Mammary epithelial cell (primary cell): ENCODE measurements at regions of chr2 and their contacts with region 1.

Region 1: GRCh38 chr2:85215448-85216401 is 82.5 kb downstream of the TCF7L1 start:
- DNase-seq: peak; percentile 55
- H3K4me3 ChIP-seq: no peak overlapping the region
- H3K27ac ChIP-seq: peak overlapping the region; percentile 9
- H3K4me1 ChIP-seq: peaks cover 20% of the 10 kb centered on the region
- H3K27me3 ChIP-seq: no peaks in the 10 kb centered on the region
- CTCF ChIP-seq: no peak

Region 2: GRCh38 chr2:85175369-85176299 is 40.1 kb before region 1 on chr2:
- CTCF ChIA-PET with region 1: no interaction called
- dilution Hi-C with region 1: no loop called
- in situ Hi-C with region 1: no loop called
- intact Hi-C with region 1: loop called (anchors 5 kb)
- DNase-seq: no peak
- H3K4me3 ChIP-seq: no peak overlapping the region
- H3K27ac ChIP-seq: no peak overlapping the region
- H3K4me1 ChIP-seq: peaks cover 12% of the 10 kb centered on the region
- H3K27me3 ChIP-seq: no peaks in the 10 kb centered on the region
- CTCF ChIP-seq: no peak

Region 3: DNA sequence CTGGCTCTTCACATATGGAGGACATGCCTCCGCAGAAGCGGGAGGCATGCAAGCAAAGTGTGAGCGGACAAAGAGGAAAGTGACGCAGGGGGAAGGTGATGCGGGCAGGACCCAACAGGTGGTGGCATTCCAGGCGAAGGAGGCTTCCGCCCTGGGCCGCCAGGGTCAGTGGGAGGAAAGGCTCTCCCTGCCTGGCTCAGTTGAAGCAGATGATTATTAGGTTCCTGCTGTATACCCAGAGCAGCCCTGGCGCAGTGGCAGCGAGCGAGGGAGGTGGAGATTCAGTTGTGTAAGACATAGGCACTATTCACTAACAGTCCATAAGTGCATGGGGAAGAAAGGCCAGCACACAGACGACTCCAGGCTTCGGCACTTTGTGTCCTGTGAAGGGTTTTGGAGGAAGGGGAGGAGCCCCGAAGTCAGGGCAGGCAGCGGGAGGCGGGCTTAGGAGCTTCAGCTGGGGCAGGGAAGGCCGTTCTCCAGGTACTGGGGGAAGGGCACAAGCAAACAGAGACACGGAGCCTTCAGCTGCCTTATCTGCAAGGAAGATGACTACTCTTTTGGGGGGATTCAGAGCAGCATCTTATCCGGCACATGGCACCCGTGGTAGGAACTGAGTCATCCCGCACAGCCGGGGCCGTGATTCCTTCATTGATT is 22.3 kb after region 1 on chr2:
- CTCF ChIA-PET with region 1: no interaction called
- dilution Hi-C with region 1: no loop called
- in situ Hi-C with region 1: no loop called
- intact Hi-C with region 1: loop called (anchors 1 kb)
- DNase-seq: no peak
- H3K4me3 ChIP-seq: no peak overlapping the region
- H3K27ac ChIP-seq: no peak overlapping the region
- H3K4me1 ChIP-seq: peaks cover 10% of the 10 kb centered on the region
- H3K27me3 ChIP-seq: no peaks in the 10 kb centered on the region
- CTCF ChIP-seq: no peak